Posterior vena cava (tissue), 2 donors: ENCODE measurements at regions of chr1 and their contacts with region 1.

Region 1: DNA sequence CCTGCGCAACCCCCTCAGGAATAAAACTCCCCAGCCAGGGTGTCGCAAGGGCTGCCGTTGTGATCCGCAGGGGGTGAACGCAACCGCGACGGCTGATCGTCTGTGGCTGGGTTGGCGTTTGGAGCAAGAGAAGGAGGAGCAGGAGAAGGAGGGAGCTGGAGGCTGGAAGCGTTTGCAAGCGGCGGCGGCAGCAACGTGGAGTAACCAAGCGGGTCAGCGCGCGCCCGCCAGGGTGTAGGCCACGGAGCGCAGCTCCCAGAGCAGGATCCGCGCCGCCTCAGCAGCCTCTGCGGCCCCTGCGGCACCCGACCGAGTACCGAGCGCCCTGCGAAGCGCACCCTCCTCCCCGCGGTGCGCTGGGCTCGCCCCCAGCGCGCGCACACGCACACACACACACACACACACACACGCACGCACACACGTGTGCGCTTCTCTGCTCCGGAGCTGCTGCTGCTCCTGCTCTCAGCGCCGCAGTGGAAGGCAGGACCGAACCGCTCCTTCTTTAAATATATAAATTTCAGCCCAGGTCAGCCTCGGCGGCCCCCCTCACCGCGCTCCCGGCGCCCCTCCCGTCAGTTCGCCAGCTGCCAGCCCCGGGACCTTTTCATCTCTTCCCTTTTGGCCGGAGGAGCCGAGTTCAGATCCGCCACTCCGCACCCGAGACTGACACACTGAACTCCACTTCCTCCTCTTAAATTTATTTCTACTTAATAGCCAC is 696 bp downstream of the TGFB2 start:
- DNase-seq: peak; percentile 92

Region 2: DNA sequence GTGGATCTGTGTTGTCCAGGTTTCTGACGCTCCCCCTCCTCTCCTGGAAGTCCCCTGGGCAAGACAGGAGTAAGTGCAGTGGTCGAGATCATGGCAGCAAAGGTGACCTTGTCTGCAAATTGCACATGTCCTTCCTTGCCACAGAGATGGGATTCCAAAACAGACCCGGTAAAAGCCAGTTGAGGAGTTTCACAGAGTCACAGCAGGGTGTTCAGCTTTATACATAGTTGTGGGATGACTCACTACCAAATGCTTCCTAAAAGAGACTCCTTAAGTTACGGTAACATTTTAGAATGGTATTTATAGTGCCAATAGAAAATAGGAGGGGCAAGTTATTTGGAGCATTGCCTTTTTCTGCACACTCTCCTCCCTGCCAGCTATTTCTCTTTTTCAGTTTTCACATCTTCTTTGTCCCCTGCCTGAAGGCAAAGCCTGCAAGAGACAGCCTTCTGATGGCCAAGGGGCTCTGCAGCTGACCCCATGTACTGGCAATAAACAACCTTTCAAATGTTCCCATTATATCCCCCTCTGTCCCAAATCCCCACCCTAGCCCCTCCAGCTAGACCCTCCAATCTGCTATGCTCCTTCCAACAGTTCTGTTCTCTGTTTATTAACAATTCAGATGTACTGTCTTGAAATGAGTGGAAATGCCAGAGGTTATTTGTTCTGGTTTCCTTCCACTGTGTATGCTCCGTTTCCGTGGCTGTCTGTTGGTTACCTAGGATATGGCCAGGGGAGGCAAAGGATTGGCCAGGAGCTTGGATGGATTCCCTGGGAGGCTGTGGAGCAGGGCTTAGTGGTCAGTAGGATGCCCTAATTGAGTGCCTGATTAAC is 114.3 kb after region 1 on chr1:
- intact Hi-C with region 1: loop called in 1 of 2 experiments (anchors 10 kb)
- DNase-seq: peak; percentile 83

Region 3: DNA sequence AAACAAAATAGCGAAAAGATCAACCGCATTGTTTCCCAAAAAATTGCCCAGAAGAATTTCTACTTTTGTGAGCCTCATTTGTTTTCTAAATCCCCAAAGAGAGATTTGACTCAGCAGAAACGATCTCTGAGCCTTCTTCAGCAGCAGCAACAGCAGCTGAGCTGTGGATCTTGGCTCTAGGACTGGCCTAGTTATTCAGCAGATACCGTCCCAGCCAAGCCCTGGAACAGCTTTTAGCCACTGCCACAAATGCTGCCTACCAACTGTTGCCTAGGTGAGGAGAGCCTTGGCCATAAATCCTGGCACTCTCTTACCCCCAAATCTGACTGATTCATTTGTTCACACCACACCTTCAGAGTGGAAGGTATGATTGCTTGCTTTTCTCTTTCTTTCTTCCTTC is 319.4 kb after region 1 on chr1:
- intact Hi-C with region 1: loop called in 1 of 2 experiments (anchors 10 kb)
- DNase-seq: peak; percentile 84

Region 4: DNA sequence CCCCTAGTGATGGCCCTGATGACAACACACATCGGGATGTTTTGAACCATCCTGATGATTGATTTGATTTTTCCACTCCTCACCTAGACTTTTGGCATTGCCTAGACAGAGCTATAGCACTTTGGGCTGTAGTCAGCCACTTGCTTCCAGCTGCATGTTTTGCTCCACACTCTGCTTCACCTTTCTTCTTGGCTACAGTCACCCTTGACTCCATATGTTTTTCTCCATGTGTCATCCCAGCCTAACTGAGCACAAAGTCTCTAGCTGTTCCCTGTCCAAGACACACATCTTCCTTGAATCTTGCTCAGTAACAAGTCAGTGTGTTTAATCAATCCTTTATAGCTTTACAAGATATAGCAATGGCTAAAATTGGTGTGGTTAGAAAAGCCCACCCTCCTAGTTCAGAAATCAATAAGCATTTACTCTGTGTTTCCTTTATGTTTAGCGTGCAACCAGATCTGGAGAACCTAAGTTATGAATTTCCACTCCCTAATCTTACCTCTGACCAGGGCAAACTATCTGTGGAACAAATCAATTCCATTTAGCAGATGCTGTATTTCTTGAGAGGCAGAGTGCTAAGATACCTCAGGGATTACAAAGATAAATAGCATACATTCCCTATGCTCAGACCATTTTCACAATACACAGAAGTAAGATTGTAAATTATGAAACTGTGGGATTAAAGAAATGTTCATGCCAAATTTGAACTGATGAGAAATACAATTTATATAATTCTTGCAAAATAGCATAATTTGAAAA is 729.5 kb after region 1 on chr1:
- intact Hi-C with region 1: loop called in 1 of 2 experiments (anchors 10 kb)
- DNase-seq: no peak